ENCODE measurements at regions of chr12 and their contacts with region 1.

Region 1: DNA sequence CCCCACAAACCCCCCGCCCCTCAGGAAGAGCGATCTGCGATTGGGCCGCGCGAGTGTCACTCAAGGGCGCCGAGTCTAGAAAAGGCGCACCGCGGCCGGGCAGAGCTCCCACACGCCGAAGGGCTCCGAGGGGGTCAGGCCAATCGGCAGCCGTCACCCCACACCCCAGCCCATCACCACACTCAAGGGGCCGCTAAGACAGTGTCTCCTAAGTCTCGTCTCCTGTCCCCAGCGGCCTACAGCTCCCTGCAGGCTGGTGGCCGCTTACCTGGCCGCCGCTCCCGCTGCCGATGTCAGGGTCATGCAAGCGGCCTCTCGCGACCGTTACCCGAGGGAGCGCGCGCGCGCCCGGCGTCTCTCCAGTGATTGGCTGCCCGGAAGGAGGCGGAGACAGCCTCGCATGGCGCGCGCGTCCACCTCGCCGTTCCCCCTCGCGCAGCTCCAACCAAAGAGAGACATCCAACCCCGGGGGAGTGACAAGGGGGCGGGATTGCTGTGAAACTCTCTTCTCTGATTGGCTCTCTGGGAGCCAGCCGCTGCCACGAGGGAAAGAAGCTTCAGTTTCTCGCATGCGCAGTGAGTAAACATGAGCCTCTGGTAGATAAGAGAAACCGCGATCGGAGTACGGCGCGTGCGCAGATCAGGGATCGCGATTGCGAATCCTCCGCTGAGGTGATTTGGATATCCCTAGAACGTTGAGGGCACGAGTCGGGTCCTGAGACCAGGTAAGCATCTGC is at the starts of genes MPHOSPH9 and MTRFR:
- DNase-seq: peak; percentile 99
- ATAC-seq: peak; percentile 91
- H3K4me3 Mint-ChIP-seq: peak within 1 kb of the TSS; percentile 90
- H3K27ac Mint-ChIP-seq: peak within 1 kb of the TSS; percentile 99
- H3K4me1 Mint-ChIP-seq: peaks cover 61% of the 10 kb centered on the region
- H3K27me3 Mint-ChIP-seq: no peaks in the 10 kb centered on the region
- total RNA-seq, gene MPHOSPH9: 94.0 to 128 TPM
- total RNA-seq, gene MTRFR: 31.1 to 34.7 TPM

Region 2: GRCh38 chr12:122526683-122527477 is 706.1 kb before region 1 on chr12 and contains the starts of genes KNTC1 and RSRC2:
- CTCF ChIA-PET with region 1: no interaction called
- POLR2A ChIA-PET with region 1: interaction called, 4 read pairs
- intact Hi-C with region 1: loop called in 1 of 2 experiments (anchors 1 kb)
- DNase-seq: peak; percentile 99
- ATAC-seq: peak; percentile 93
- H3K4me3 Mint-ChIP-seq: no peak within 1 kb of the TSS
- H3K27ac Mint-ChIP-seq: no peak within 1 kb of the TSS
- H3K4me1 Mint-ChIP-seq: peaks cover 37% of the 10 kb centered on the region
- H3K27me3 Mint-ChIP-seq: no peaks in the 10 kb centered on the region
- total RNA-seq, gene KNTC1: 136 to 175 TPM
- total RNA-seq, gene RSRC2: 92.7 to 105 TPM

Region 3: DNA sequence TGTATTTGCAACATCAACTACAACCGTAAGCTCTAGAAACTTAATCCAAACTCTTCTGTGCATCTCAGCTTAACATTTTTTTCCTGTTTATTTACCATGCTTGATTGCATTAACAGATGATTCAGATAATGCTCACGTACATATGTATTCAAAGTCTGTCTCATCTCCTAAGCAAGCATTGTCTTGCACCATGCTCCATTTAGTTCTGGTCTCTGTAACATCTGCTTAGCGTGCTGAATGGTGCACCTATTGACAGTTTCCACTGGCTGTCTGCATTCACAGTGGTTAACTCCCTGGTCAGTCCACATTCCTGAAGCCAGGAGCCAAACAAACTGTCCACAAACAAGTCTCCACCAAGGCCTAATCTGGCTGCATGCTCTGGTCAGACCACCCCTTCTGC is 622.1 kb before region 1 on chr12:
- CTCF ChIA-PET with region 1: no interaction called
- POLR2A ChIA-PET with region 1: no interaction called
- intact Hi-C with region 1: no loop called
- DNase-seq: no peak
- ATAC-seq: no peak
- H3K4me3 Mint-ChIP-seq: no peak overlapping the region
- H3K27ac Mint-ChIP-seq: no peak overlapping the region
- H3K4me1 Mint-ChIP-seq: no peaks in the 10 kb centered on the region
- H3K27me3 Mint-ChIP-seq: no peaks in the 10 kb centered on the region

Region 4: GRCh38 chr12:122965851-122966722 is 266.9 kb before region 1 on chr12 and contains the start of gene ABCB9:
- CTCF ChIA-PET with region 1: no interaction called
- POLR2A ChIA-PET with region 1: interaction called, 6 read pairs
- intact Hi-C with region 1: loop called in 1 of 2 experiments (anchors 1 kb)
- DNase-seq: peak; percentile 99
- ATAC-seq: peak; percentile 99
- H3K4me3 Mint-ChIP-seq: peak within 1 kb of the TSS; percentile 63
- H3K27ac Mint-ChIP-seq: peak within 1 kb of the TSS; percentile 42
- H3K4me1 Mint-ChIP-seq: peaks cover 2% of the 10 kb centered on the region
- H3K27me3 Mint-ChIP-seq: no peaks in the 10 kb centered on the region
- total RNA-seq, gene ABCB9: 3.8 to 6.3 TPM

Region 5: GRCh38 chr12:123075646-123076171 is 157.3 kb before region 1 on chr12:
- CTCF ChIA-PET with region 1: interaction called, 4 read pairs
- POLR2A ChIA-PET with region 1: interaction called, 7 read pairs
- intact Hi-C with region 1: loop called (anchors 1 to 5 kb)
- DNase-seq: peak; percentile 87
- ATAC-seq: peak; percentile 75
- H3K4me3 Mint-ChIP-seq: peak overlapping the region; percentile 68
- H3K27ac Mint-ChIP-seq: peak overlapping the region; percentile 94
- H3K4me1 Mint-ChIP-seq: peaks cover 56% of the 10 kb centered on the region
- H3K27me3 Mint-ChIP-seq: no peaks in the 10 kb centered on the region

Region 6: DNA sequence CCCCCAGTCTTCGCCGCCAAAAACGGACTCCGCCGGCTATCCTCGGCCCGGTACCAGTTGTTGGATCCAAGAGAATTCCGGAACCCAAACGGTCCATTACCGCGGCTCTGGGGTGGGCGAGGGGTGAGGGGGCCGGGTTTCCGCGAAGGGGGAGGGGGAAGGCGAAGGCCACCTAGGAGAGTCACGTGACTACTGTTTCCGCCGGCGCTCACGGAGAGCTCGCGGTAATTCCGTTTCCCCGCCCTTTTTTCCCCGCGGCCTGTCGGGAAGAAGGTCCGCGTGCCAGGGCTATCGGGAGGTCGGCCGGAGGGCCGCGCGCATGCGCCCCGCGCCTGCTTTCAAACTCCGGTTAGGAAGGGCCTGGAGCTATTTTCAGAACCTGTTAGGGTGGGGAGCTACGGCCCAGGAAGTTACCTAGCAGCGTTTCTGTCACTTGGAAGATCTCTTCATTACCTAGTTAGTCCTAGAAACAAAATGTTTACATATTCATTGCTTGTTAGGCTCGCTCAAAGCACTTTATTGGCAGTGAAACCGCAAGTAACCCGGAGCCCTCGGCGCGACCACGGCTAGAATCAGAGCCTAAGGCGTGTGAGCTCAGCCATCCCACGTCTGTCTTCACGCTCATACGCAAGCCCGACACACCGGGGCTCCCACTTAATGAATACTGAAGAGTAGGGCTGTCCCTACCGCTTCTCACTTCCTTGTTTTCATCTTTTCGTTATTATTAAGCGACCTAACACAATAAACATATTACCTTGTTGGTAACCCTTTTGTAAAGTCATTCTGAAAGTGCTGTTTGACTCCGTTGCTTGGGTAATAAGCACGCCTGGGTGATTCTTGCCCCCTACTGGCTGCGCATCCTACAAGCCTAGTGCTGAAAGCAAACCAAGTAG is 132.3 kb after region 1 on chr12:
- CTCF ChIA-PET with region 1: interaction called, 17 read pairs
- POLR2A ChIA-PET with region 1: interaction called, 23 read pairs
- intact Hi-C with region 1: loop called in 1 of 2 experiments (anchors 1 kb)
- DNase-seq: peak; percentile 98
- ATAC-seq: peak; percentile 82
- H3K4me3 Mint-ChIP-seq: peak overlapping the region; percentile 86
- H3K27ac Mint-ChIP-seq: peak overlapping the region; percentile 98
- H3K4me1 Mint-ChIP-seq: peaks cover 19% of the 10 kb centered on the region
- H3K27me3 Mint-ChIP-seq: no peaks in the 10 kb centered on the region

Region 7: GRCh38 chr12:123457980-123458783 is 225.2 kb after region 1 on chr12 and contains the start of gene SNRNP35:
- CTCF ChIA-PET with region 1: no interaction called
- POLR2A ChIA-PET with region 1: interaction called, 5 read pairs
- intact Hi-C with region 1: loop called in 1 of 2 experiments (anchors 1 kb)
- DNase-seq: peak; percentile 88
- ATAC-seq: peak; percentile 73
- H3K4me3 Mint-ChIP-seq: peak within 1 kb of the TSS; percentile 98
- H3K27ac Mint-ChIP-seq: peak within 1 kb of the TSS; percentile 100
- H3K4me1 Mint-ChIP-seq: peaks cover 26% of the 10 kb centered on the region
- H3K27me3 Mint-ChIP-seq: no peaks in the 10 kb centered on the region
- total RNA-seq, gene SNRNP35: 24.1 to 24.8 TPM

Region 8: GRCh38 chr12:123972457-123973401 is 739.8 kb after region 1 on chr12 and contains the starts of genes CCDC92 and ZNF664:
- CTCF ChIA-PET with region 1: no interaction called
- POLR2A ChIA-PET with region 1: no interaction called
- intact Hi-C with region 1: loop called in 1 of 2 experiments (anchors 5 kb)
- DNase-seq: peak; percentile 98
- ATAC-seq: peak; percentile 87
- H3K4me3 Mint-ChIP-seq: peak within 1 kb of the TSS; percentile 87
- H3K27ac Mint-ChIP-seq: peak within 1 kb of the TSS; percentile 89
- H3K4me1 Mint-ChIP-seq: peaks cover 48% of the 10 kb centered on the region
- H3K27me3 Mint-ChIP-seq: no peaks in the 10 kb centered on the region
- total RNA-seq, gene CCDC92: 8.7 to 11.0 TPM
- total RNA-seq, gene ZNF664: 46.4 to 48.3 TPM